ENCODE measurements at regions of chr15 and their contacts with region 1.

Region 1: DNA sequence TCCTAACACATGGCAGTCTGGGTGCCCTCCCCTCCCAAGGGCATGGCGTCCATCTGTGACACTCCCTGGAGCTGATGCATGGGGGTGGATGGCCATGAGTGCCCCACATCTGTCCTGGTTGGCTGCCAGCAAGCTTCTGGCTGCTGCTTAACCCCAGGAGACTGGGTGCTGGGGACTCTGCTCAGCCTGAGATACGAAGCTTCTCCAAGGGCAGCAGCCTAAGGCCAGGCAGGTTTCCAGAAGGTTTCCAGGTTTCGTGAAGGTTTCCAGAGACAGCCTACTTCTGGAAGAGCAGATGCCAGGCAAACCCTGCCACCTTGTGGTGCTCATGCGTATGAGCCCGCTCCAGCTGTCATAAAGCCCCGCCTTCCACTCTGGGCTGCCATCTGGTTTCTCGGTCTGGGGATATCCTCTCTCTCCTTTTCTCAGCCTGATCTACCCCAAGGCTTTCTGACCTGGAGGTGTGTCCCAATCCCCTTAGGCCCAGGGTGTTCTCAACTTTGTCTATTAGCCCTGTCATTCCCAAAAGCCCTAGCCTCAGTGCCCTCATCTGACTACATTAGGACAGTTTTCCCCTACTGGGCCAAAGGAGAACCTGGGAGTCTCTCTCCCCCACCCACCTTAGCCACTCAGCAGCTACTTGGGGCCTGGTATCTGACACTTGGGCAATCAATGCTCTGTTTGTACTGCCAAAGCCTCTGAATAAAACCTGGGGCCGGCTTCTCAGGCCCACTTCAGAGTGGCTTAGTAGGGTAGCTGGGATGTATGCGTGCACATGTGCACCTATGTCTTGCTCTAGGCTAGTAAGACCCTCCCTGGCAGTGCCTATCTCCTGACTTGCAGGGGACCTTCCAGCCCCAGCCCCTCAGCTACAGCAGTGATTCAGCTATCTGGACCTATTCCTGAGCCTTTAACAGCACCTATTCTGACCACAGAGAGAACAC is 12.0 kb downstream of the MRPL46 start:
- DNase-seq: peak; percentile 78 to 84
- ATAC-seq: peak; percentile 90 to 96
- H3K4me3 ChIP-seq: no peak overlapping the region
- H3K27ac ChIP-seq: peak overlapping the region; percentile 14 to 61; a peak in 3 of 6 replicates
- H3K4me1 ChIP-seq: peaks cover 10% of the 10 kb centered on the region
- CTCF ChIP-seq: peak; percentile 83
- EP300 ChIP-seq: no peak
- POLR2A ChIP-seq: no peak
- RAD21 ChIP-seq: peak; percentile 86 to 88

Region 2: DNA sequence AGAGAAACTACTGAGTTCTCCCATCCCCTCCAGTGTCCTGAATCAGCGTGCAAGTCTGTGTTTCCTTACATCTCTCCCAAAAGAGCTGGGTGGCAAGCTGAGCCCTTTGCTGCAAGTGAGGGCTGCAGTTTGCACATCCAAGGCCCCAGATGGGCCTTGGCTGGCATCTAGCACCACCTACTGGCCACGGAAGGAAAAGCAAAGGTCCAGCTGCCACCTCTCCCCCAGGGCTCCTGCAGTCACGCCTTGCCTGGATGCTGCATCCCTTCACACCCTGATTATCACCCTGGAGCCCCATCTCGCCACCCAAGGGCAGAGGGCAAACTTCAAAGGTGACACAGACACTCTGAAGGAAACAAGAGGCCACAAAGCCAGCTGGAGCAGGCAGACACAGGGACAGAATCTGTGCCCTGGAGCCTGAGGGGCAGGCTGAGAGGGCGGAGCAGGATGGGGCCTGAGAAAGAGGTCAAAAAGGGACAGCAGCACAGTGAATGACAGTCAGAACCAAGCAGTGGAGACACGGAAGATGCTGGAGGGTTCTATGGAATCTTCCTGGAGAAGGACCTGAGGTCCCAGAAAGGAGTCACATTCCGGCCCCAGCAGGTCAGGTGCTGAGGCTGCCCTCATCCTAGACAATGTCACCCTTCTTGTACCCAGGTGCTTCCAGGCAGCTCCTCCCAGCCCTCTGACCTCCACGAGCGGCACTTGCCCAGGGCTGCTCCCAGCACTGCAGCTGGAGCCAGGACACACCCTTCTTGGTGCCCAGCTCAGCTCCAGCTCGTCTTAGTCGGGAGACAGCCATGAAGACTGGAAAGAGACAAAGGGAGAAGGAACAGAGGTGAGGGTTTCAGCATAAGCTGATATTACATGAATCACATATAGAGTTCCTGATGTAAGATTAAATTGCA is 180.3 kb before region 1 on chr15:
- CTCF ChIA-PET with region 1: interaction called, 35 read pairs
- POLR2A ChIA-PET with region 1: no interaction called
- DNase-seq: peak; percentile 69 to 91
- ATAC-seq: peak; percentile 82 to 96
- H3K4me3 ChIP-seq: no peak overlapping the region
- H3K27ac ChIP-seq: peak overlapping the region; percentile 18 to 58; a peak in 4 of 6 replicates
- H3K4me1 ChIP-seq: peaks cover 10% of the 10 kb centered on the region; the same call in 2 of the 3 replicates
- CTCF ChIP-seq: peak; percentile 94
- EP300 ChIP-seq: no peak
- POLR2A ChIP-seq: no peak
- RAD21 ChIP-seq: peak; percentile 88 to 90

Region 3: GRCh38 chr15:88440021-88440420 is 15.1 kb before region 1 on chr15:
- CTCF ChIA-PET with region 1: interaction called, 23 read pairs
- POLR2A ChIA-PET with region 1: no interaction called
- DNase-seq: peak in 1 of 2 experiments; percentile 42
- ATAC-seq: peak in 1 of 2 experiments; percentile 65; a peak in 3 of 6 replicates
- H3K4me3 ChIP-seq: no peak overlapping the region
- H3K27ac ChIP-seq: peak overlapping the region in 1 of 2 experiments; percentile 58; a peak in 3 of 6 replicates
- H3K4me1 ChIP-seq: peaks cover 11% of the 10 kb centered on the region; the same call in 2 of the 3 replicates
- CTCF ChIP-seq: no peak
- EP300 ChIP-seq: no peak
- POLR2A ChIP-seq: no peak
- RAD21 ChIP-seq: no peak

Region 4: DNA sequence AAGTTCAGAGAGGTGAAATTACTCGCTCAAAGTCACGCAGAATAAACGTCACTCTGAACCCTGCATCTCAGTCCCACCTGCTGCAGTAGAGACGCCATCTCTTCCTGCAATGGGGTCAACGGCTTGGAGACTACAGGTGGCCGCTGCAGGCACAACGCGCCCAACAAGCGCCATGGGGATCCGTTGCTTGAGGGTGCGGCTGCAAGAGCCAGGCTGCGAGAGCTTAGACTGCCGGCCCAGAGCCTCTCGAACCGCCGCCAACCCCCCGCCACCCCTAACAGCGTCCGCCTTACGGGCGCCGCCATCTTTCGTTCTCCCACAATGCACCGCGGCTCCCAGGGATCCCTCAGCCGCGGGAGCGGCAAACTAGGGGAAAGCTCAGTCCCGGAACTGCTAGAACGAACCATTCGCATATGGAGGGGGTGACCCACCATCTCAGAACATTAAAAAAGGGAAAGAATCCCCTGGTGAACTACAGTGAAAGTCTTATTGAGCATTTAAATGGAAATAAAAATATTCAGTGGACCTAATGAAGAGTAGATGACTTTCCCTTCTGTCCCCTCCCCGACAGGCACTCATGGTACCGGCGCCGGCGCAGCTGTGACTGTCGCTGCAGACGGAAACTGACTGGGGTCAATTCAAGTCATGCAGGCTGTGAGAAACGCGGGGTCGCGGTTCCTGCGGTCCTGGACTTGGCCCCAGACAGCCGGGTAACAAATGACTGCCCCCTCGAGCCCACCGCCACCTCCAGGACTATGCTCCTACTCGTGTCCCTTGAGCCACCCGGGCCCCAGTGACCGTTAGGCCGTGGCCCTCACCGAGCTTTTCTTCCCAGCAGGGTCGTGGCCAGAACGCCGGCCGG is 12.2 kb after region 1 on chr15 and contains the starts of genes MRPL46 and MRPS11:
- CTCF ChIA-PET with region 1: interaction called, 32 read pairs
- POLR2A ChIA-PET with region 1: interaction called, 29 read pairs
- DNase-seq: peak; percentile 91 to 92
- ATAC-seq: peak; percentile 89 to 97
- H3K4me3 ChIP-seq: peak within 1 kb of the TSS; percentile 73
- H3K27ac ChIP-seq: peak within 1 kb of the TSS; percentile 92 to 94
- H3K4me1 ChIP-seq: peaks cover 18% of the 10 kb centered on the region
- CTCF ChIP-seq: no peak
- EP300 ChIP-seq: no peak
- POLR2A ChIP-seq: peak; percentile 69
- RAD21 ChIP-seq: no peak
- polyA plus RNA-seq, gene MRPL46: 66.9 and 76.1 TPM in 2 replicates
- polyA plus RNA-seq, gene MRPS11: 99.0 and 102 TPM in 2 replicates

Region 5: DNA sequence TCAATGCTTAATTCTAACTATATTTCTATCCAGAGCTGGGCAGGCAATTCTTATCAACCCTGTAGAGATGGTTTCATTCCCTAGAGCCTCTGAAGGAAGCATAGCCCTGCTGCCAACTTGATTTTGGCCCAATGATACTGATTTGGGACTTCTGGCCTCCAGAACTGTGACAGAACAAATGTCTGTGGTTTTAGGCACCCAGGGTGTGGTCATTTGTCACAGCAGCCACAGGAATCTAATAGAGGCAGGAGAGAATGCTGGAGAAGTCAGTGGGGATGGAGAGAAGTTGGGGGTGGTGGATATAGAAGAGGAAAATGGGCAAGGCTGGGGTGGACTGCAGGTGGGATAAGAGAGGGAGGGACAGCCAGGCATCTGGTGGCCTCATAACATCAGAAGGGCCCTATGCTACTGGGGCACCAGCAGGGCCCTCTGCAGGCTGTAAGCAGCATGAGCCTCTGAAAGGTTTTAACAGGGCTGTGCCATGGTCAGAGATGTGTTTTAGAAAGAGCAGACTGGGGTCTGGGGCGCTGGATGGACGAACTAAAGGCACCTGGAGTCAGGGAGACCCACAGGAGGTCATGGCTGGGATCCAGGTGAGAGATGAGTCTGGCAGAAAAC is 32.1 kb after region 1 on chr15:
- CTCF ChIA-PET with region 1: no interaction called
- POLR2A ChIA-PET with region 1: no interaction called
- DNase-seq: no peak
- ATAC-seq: peak in 1 of 2 experiments; percentile 46; a peak in 3 of 6 replicates
- H3K4me3 ChIP-seq: no peak overlapping the region
- H3K27ac ChIP-seq: no peak overlapping the region
- H3K4me1 ChIP-seq: no peaks in the 10 kb centered on the region
- CTCF ChIP-seq: no peak
- EP300 ChIP-seq: no peak
- POLR2A ChIP-seq: no peak
- RAD21 ChIP-seq: no peak

Region 6: GRCh38 chr15:88498996-88499395 is 43.9 kb after region 1 on chr15:
- CTCF ChIA-PET with region 1: no interaction called
- POLR2A ChIA-PET with region 1: no interaction called
- DNase-seq: no peak
- ATAC-seq: no peak
- H3K4me3 ChIP-seq: no peak overlapping the region
- H3K27ac ChIP-seq: no peak overlapping the region
- H3K4me1 ChIP-seq: no peaks in the 10 kb centered on the region
- CTCF ChIP-seq: no peak
- EP300 ChIP-seq: no peak
- POLR2A ChIP-seq: no peak
- RAD21 ChIP-seq: no peak